Common myeloid progenitor, CD34-positive (primary cell): ENCODE measurements at regions of chr15 and their contacts with region 1.

Region 1: DNA sequence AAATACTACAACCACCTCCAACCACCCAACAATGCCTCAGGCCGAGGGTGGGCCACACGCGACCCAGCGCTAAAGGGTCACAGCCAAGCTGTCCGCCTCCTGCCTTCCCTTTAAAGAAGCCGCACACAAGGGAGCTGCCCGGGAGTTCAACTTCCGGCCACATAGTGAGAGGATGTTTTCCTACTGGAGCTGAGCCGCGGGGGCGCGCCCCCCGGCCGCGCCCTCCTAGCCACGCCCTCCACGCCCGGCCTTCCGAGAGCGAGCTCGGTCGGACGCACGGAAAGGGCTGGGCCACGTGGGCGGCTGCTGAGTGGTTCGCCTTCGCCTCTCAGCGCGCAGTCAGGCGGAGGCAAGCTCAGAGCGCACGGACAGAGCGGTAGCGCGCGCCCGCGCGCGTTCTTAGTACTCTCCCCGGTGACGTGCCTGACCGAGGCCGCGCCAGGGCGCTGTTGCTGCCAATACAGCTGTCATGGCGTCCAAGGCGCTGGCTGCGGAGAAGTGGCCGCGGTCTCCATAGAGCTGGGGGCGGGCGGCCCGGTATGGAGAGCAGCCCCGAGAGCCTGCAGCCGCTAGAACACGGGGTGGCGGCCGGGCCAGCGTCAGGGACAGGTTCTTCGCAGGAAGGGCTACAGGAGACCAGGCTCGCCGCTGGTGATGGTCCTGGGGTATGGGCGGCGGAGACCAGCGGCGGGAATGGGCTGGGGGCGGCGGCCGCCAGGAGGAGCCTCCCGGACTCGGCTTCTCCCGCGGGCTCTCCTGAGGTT is at the start of gene MINDY2:
- DNase-seq: peak; percentile 97 to 99 (median 98)
- H3K4me3 ChIP-seq: peak within 1 kb of the TSS; percentile 84 to 100 (median 94)
- H3K27ac ChIP-seq: peak within 1 kb of the TSS; percentile 54 to 88
- H3K4me1 ChIP-seq: peaks cover 10 to 29% (median 18%) of the 10 kb centered on the region in 4 experiments
- H3K27me3 ChIP-seq: no peaks in the 10 kb centered on the region

Region 2: DNA sequence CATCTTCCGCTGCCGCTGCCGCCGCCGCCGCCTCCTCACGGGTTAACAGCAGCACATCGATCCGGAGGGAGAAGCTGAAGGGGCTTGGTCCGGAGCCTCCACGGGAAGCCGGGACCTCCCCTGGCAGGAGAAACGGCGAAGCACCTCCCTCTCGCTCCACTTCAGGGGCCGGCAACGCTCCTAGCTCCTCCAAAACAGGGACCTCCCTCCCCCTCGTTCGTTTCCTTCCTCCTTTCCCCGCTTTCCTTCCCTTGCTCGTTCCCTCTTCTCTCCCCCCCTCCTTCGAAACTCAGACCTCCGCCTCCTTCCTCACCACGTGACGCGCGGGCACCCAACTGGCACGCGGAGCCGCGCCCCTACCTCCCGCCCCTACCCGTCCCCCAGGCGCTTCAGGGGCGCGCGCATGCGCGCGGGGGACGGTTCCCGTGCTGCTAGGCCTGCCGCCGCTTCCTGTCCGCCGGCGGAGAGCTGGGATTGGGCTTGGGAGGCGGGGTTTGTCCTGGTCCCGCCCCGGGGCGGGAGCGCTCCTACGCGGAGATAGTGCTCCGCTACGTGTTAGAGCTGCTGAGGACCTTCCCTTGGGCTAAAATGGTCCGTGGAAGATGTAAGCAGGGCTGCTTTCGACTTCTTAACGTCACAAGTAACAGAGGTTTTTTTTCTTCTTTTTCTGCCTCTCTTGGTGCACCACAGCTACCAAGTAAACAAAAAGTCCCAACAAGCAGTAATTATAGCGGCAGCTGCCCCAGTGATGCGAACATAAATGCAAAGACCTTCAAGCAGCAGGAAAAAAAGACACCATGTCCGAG is 21.3 kb before region 1 on chr15 and contains the start of gene ADAM10:
- CTCF ChIA-PET with region 1: interaction called, 13 read pairs
- POLR2A ChIA-PET with region 1: interaction called, 11 read pairs
- DNase-seq: peak; percentile 98
- H3K4me3 ChIP-seq: peak within 1 kb of the TSS; percentile 83 to 99 (median 94)
- H3K27ac ChIP-seq: peak within 1 kb of the TSS; percentile 75 to 93
- H3K4me1 ChIP-seq: peaks cover 5 to 40% (median 25%) of the 10 kb centered on the region in 4 experiments
- H3K27me3 ChIP-seq: no peaks in the 10 kb centered on the region